Activated naive CD4-positive, alpha-beta T cell treated with anti-CD3 and anti-CD28 coated beads for 36 hours (primary cell): ENCODE measurements at regions of chr1 and their contacts with region 1.

Region 1: DNA sequence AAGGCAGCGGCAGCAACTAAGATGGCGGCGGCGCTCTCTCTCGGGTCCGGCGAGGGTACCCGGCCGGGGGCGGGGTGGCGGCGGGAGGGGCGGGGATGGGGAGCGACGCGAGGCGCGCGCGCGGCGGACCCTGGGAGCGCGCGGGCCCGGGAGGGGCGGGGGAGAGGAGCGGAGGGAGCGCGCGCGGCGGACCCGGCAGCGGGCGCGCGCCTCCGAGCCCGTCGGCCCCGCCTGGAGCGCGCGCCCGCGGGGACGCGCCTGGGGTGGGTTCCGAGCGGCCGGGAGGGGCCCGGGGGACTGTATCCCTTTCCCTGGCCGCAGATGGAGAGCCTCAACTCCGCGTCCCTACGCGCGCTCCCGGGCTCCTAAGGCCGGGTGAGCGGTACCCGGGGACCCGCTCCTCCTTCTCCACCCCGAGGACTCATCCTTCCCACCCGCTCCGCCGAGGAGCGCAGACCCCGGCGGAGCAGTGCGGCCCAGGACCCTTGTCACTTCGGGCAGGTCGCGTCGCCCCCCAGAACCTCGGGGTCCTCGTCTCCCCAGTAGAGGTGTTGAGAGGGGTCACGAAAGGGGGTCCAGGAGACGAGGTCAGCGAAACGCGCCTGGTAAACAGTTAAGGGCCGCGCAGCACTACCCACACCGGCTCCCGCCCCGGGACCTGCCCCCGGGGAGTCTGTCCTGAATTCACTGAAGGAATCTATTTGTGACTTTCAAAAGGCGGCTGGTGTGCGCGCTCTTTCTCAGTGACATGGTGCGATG is at the start of gene CLSTN1:
- DNase-seq: peak; percentile 91
- H3K4me3 Mint-ChIP-seq: peak within 1 kb of the TSS; percentile 94
- H3K27ac Mint-ChIP-seq: peak within 1 kb of the TSS; percentile 8
- H3K4me1 Mint-ChIP-seq: peaks cover 41% of the 10 kb centered on the region
- H3K27me3 Mint-ChIP-seq: peaks cover 14% of the 10 kb centered on the region
- total RNA-seq, gene CLSTN1: 24.0 to 24.9 TPM

Region 2: DNA sequence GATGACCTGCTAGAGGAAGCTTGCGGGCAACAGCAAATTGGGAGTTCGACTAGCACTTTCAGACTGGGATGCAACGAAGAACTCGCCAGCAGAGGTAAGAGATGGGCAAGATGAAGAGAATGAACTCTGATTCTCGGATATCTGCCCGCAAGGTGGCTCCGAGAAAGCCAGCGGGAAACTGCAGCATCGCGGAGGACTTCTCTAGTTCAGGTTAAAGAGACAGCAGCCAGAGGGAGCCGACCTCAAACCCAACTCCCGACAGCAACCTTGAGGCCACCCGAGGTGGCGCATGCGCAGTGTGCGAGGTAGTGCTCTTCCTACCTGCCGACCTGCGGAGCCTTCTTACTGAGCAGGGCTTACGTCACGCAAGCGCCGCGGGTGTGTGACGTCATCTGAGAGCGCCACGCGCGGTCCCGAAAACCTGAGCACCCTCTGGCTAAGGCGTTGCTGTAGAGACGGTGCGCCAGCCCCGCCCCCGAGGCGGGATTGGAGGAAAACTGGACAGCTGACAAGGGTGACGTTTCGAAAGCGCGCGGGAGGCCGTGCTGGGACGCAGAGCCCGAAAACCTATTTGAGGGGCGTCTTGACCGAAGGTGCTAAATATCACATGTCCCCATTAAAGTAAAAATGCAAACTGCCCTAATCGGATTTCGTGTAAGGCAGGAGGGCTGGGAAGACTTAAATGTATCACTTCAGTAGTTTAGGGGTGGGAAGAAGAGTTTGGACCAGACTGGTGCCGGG is 395.4 kb before region 1 on chr1:
- CTCF ChIA-PET with region 1: no interaction called
- intact Hi-C with region 1: no loop called
- DNase-seq: peak; percentile 100
- H3K4me3 Mint-ChIP-seq: peak overlapping the region; percentile 98
- H3K27ac Mint-ChIP-seq: peak overlapping the region; percentile 95
- H3K4me1 Mint-ChIP-seq: peaks cover 46% of the 10 kb centered on the region
- H3K27me3 Mint-ChIP-seq: no peaks in the 10 kb centered on the region

Region 3: DNA sequence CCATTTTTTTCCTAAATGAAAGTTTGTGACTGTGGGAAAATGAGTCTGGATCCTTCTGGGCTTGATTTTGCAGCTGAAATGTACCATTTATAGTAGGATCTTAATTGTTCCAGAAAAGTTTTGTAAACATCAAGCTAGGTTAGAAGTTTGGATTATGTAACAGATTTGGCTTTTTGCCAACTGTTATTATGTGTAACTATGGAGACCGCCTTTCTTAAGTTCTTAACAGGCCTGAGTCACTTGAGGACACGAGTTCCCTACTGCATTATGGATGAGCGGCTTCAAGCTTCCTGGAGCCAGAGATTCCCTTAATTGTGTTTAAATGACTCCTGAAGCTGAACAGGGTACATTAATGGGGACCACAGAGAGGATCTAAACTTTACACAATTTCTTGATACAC is 262.7 kb before region 1 on chr1:
- CTCF ChIA-PET with region 1: no interaction called
- intact Hi-C with region 1: no loop called
- DNase-seq: no peak
- H3K4me3 Mint-ChIP-seq: no peak overlapping the region
- H3K27ac Mint-ChIP-seq: no peak overlapping the region
- H3K4me1 Mint-ChIP-seq: peaks cover 26% of the 10 kb centered on the region
- H3K27me3 Mint-ChIP-seq: no peaks in the 10 kb centered on the region

Region 4: GRCh38 chr1:9588551-9589143 is 235.5 kb before region 1 on chr1 and contains the start of gene TMEM201:
- CTCF ChIA-PET with region 1: no interaction called
- intact Hi-C with region 1: loop called (anchors 1 kb)
- DNase-seq: peak; percentile 92
- H3K4me3 Mint-ChIP-seq: peak within 1 kb of the TSS; percentile 78
- H3K27ac Mint-ChIP-seq: no peak within 1 kb of the TSS
- H3K4me1 Mint-ChIP-seq: peaks cover 38% of the 10 kb centered on the region
- H3K27me3 Mint-ChIP-seq: no peaks in the 10 kb centered on the region
- total RNA-seq, gene TMEM201: 9.1 to 9.8 TPM

Region 5: GRCh38 chr1:9657521-9658032 is 166.5 kb before region 1 on chr1:
- CTCF ChIA-PET with region 1: no interaction called
- intact Hi-C with region 1: loop called (anchors 2 kb)
- DNase-seq: peak; percentile 54
- H3K4me3 Mint-ChIP-seq: peak overlapping the region; percentile 26
- H3K27ac Mint-ChIP-seq: peak overlapping the region; percentile 100
- H3K4me1 Mint-ChIP-seq: peaks cover 77% of the 10 kb centered on the region
- H3K27me3 Mint-ChIP-seq: no peaks in the 10 kb centered on the region

Region 6: DNA sequence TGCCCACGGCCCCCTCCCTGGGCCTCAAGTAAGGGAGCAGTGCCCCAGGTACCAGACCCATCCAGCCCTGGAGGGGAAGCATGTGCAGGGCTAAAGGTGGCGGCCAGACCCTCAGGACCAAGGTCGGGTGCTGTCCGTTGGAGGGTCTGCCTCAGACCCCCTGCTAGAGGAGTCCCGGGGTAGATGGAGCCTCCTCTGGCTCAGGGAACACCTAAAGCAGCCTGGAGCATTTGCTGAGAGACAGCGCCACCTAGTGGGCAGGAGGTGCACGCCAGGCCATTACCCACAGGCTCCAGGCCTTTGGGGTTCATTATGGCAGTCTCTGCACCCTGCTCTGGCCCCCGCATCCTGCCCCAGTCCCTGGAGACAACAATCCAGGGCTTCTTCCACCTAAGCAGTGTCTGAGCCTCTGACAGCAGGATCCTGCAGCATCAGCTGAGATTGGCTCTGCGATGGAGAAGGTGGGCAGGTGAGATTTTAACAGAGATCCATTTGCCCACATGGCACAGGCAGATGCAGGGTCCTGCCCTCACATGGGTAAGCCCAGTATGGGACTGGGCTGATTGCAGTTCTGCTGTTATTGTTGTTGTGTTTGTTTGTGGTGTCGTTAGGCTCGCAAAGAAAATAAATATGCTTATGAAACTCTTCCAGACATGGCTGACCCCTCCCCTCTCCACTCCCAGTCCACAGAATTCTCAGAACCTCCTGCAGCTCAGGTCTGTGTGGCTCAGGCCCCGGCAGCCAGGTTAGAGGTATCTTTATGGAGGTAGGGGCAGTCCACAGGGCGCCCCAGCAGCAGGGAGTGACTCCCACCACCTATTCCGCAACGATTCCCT is 43.5 kb after region 1 on chr1:
- CTCF ChIA-PET with region 1: interaction called, 4 read pairs
- intact Hi-C with region 1: loop called (anchors 5 kb)
- DNase-seq: peak; percentile 95
- H3K4me3 Mint-ChIP-seq: no peak overlapping the region
- H3K27ac Mint-ChIP-seq: no peak overlapping the region
- H3K4me1 Mint-ChIP-seq: no peaks in the 10 kb centered on the region
- H3K27me3 Mint-ChIP-seq: no peaks in the 10 kb centered on the region